ENCODE measurements at regions of chr12 and their contacts with region 1.

Region 1: GRCh38 chr12:105748806-105749600 is 389.8 kb downstream of the NUAK1 start:
- DNase-seq: peak; percentile 57 to 75
- H3K4me3 ChIP-seq: no peak overlapping the region
- H3K27ac ChIP-seq: peak overlapping the region; percentile 53 to 55
- H3K4me1 ChIP-seq: no peaks in the 10 kb centered on the region
- H3K27me3 ChIP-seq: no peaks in the 10 kb centered on the region
- CTCF ChIP-seq: no peak
- POLR2A ChIP-seq: no peak

Region 2: DNA sequence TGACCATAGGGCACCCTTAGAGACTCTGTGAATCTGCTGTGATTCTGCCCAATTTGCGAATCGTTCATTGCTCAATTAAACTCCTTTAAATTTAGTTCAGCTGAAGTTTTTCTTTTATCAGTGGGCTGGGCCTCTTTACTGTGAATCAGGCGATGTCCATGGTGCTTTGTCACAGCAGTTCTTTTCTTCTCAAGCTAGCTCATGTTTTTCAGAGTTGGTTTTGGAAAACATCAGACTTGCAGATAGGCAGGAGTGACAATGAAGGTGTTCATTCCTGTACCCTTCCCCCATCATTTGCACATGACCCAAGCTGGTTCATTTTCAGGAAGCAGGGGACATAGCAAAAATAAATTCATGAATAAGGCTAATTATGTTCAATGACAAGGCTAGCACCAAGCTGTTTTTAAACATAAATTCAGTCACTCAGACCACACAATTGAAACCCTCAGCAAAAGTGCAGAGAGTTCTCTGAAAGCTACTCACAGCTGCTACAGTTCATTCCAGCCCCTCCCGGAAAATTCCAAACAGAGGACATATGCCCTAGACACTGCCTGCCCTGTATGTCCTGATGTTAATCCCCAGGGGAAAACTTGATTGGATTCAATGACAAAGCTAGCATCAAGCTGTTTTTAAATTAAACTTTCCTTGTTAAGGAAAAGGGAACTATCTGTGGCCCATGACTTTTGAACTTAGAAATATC is 35.2 kb before region 1 on chr12:
- intact Hi-C with region 1: loop called (anchors 5 kb)
- DNase-seq: no peak
- H3K4me3 ChIP-seq: no peak overlapping the region
- H3K27ac ChIP-seq: no peak overlapping the region
- H3K4me1 ChIP-seq: no peaks in the 10 kb centered on the region
- H3K27me3 ChIP-seq: no peaks in the 10 kb centered on the region
- CTCF ChIP-seq: no peak
- POLR2A ChIP-seq: no peak

Region 3: DNA sequence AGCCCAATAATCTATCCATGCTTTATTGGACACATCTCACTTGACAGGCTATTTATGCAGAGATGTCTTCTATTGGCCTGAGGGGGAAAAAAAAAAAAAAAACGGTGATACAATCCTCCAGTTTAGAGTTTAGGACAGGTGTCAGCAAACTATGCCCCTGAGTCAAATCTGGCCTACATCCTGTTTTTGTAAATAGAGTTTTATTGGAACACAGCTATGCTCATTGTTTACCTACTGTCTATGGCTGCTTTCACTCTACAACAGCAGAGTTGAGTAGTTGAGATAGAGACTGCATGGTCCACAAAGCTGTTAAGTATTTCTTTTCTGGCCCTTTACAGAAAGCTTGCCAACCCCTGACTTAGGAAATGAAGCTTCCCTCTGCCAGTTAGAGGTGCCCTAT is 15.4 kb before region 1 on chr12:
- intact Hi-C with region 1: no loop called
- DNase-seq: no peak
- H3K4me3 ChIP-seq: no peak overlapping the region
- H3K27ac ChIP-seq: no peak overlapping the region
- H3K4me1 ChIP-seq: no peaks in the 10 kb centered on the region
- H3K27me3 ChIP-seq: no peaks in the 10 kb centered on the region
- CTCF ChIP-seq: no peak
- POLR2A ChIP-seq: no peak

Region 4: GRCh38 chr12:105906545-105906944 is 157.5 kb after region 1 on chr12:
- intact Hi-C with region 1: no loop called
- DNase-seq: no peak
- H3K4me3 ChIP-seq: no peak overlapping the region
- H3K27ac ChIP-seq: no peak overlapping the region
- H3K4me1 ChIP-seq: no peaks in the 10 kb centered on the region
- H3K27me3 ChIP-seq: no peaks in the 10 kb centered on the region
- CTCF ChIP-seq: no peak
- POLR2A ChIP-seq: no peak

Region 5: DNA sequence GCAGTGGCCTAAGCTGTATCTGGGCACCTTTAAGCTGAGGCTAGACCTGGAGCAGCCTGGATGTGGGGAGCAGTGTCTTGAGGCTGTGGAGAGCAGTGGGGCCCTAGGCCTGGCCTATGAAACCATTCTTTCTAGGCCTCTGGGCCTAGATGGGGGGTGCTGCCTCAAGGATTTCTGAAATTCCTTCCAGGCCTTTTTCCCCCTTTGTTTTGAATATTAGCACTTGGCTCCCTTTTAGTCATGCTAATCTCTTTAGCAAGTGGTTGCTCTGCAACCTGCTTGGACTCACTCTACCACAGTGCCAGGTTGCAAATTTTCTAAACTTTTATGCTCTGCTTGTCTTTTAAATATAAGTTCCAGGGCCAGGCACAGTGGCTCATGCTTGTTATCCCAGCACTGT is 792.2 kb after region 1 on chr12:
- intact Hi-C with region 1: no loop called
- DNase-seq: no peak
- H3K4me3 ChIP-seq: no peak overlapping the region
- H3K27ac ChIP-seq: no peak overlapping the region
- H3K4me1 ChIP-seq: no peaks in the 10 kb centered on the region
- H3K27me3 ChIP-seq: no peaks in the 10 kb centered on the region
- CTCF ChIP-seq: no peak
- POLR2A ChIP-seq: no peak